ENCODE measurements at regions of chr3 and their contacts with region 1.

Region 1: GRCh38 chr3:127672516-127673190 is at the start of gene ABTB1:
- DNase-seq: peak; percentile 82
- H3K4me3 Mint-ChIP-seq: peak within 1 kb of the TSS; percentile 92
- H3K27ac Mint-ChIP-seq: peak within 1 kb of the TSS; percentile 97
- H3K4me1 Mint-ChIP-seq: peaks cover 14% of the 10 kb centered on the region
- H3K27me3 Mint-ChIP-seq: no peaks in the 10 kb centered on the region
- total RNA-seq, gene ABTB1: 9.7 TPM in 2 replicates

Region 2: GRCh38 chr3:125916376-125916978 is 1756.2 kb before region 1 on chr3:
- intact Hi-C with region 1: loop called (anchors 10 kb)
- DNase-seq: peak; percentile 93
- H3K4me3 Mint-ChIP-seq: peak overlapping the region; percentile 86
- H3K27ac Mint-ChIP-seq: peak overlapping the region; percentile 83
- H3K4me1 Mint-ChIP-seq: peaks cover 24% of the 10 kb centered on the region
- H3K27me3 Mint-ChIP-seq: peaks cover 4% of the 10 kb centered on the region

Region 3: GRCh38 chr3:127598841-127599570 is 73.6 kb before region 1 on chr3:
- intact Hi-C with region 1: loop called (anchors 1 kb)
- DNase-seq: no peak
- H3K4me3 Mint-ChIP-seq: peak overlapping the region; percentile 100
- H3K27ac Mint-ChIP-seq: peak overlapping the region; percentile 99
- H3K4me1 Mint-ChIP-seq: peaks cover 45% of the 10 kb centered on the region
- H3K27me3 Mint-ChIP-seq: no peaks in the 10 kb centered on the region

Region 4: DNA sequence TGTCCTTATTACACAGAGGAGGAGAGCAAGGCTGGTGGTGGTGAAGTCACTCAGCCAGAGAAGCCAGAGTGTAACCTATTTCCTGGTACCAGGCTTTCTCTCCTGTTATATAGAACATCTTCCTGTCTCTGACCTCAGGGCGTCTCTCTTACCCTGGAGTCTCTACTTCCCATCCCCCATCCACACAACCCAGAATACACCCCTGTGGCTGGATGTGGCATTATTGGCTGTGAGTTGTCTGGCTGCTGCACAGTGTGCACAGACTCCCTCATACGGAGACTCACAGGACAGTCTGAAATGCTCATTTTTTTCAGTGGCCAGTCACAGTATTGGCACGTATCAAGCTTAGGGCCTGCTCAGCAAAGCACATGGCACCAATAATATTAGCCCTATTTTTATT is 35.1 kb before region 1 on chr3:
- intact Hi-C with region 1: loop called (anchors 2 kb)
- DNase-seq: peak; percentile 59
- H3K4me3 Mint-ChIP-seq: no peak overlapping the region
- H3K27ac Mint-ChIP-seq: peak overlapping the region; percentile 6
- H3K4me1 Mint-ChIP-seq: peaks cover 15% of the 10 kb centered on the region
- H3K27me3 Mint-ChIP-seq: peaks cover 5% of the 10 kb centered on the region

Region 5: DNA sequence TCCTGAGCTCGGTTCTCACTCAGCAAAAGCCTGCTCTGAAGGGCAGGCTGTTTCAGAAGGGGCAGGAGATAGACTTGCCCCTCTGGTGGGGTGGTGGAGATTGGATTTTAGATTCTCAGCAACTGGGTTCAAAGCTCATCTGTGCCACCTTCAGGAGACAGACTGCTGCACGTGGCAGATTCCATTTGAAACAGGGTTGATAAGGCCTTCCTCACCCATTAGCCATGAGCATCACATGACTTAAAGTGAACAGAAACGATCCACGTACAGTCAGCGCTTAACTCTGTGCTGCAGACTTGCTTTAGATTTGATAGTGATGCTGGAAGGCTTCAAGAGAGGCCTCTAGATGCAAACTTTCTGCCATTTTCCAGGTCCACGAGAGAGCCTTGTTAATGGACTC is 184.7 kb after region 1 on chr3:
- intact Hi-C with region 1: no loop called
- DNase-seq: no peak
- H3K4me3 Mint-ChIP-seq: no peak overlapping the region
- H3K27ac Mint-ChIP-seq: no peak overlapping the region
- H3K4me1 Mint-ChIP-seq: no peaks in the 10 kb centered on the region
- H3K27me3 Mint-ChIP-seq: peaks cover 5% of the 10 kb centered on the region

Region 6: GRCh38 chr3:128051837-128052594 is 379.4 kb after region 1 on chr3 and contains the start of gene SEC61A1:
- intact Hi-C with region 1: loop called (anchors 1 kb)
- DNase-seq: peak; percentile 96
- H3K4me3 Mint-ChIP-seq: peak within 1 kb of the TSS; percentile 99
- H3K27ac Mint-ChIP-seq: peak within 1 kb of the TSS; percentile 96
- H3K4me1 Mint-ChIP-seq: peaks cover 43% of the 10 kb centered on the region
- H3K27me3 Mint-ChIP-seq: peaks cover 6% of the 10 kb centered on the region
- total RNA-seq, gene SEC61A1: 205 and 214 TPM in 2 replicates

Region 7: GRCh38 chr3:128153156-128154041 is 480.7 kb after region 1 on chr3 and contains the start of gene EEFSEC:
- intact Hi-C with region 1: loop called (anchors 2 kb)
- DNase-seq: peak; percentile 82
- H3K4me3 Mint-ChIP-seq: peak within 1 kb of the TSS; percentile 94
- H3K27ac Mint-ChIP-seq: peak within 1 kb of the TSS; percentile 98
- H3K4me1 Mint-ChIP-seq: peaks cover 31% of the 10 kb centered on the region
- H3K27me3 Mint-ChIP-seq: peaks cover 3% of the 10 kb centered on the region
- total RNA-seq, gene EEFSEC: 18.7 and 19.5 TPM in 2 replicates

Measured in activated T-helper 1 cell treated with anti-CD3 and anti-CD28 coated beads, Interleukin-12 subunit alpha, Interleukin-12 subunit beta, Interleukin-2, Interleukin-4 antibody, amounts not matched to agents 30 ng/mL and 10 ng/mL and 1 ng/mL, durations not matched to agents 14 hours and 24 hours and 36 hours (primary cell).